Uterus (tissue), 4 donors: ENCODE measurements at regions of chr2 and their contacts with region 1.

Region 1: GRCh38 chr2:38740851-38741731 is 10.1 kb downstream of the SRSF7 start:
- DNase-seq: no peak
- H3K4me3 ChIP-seq: no peak overlapping the region
- H3K27ac ChIP-seq: peak overlapping the region; percentile 70 to 77
- H3K4me1 ChIP-seq: no peaks in the 10 kb centered on the region
- H3K27me3 ChIP-seq: no peaks in the 10 kb centered on the region
- CTCF ChIP-seq: peak; percentile 55 to 70 (median 67)
- POLR2A ChIP-seq: no peak

Region 2: DNA sequence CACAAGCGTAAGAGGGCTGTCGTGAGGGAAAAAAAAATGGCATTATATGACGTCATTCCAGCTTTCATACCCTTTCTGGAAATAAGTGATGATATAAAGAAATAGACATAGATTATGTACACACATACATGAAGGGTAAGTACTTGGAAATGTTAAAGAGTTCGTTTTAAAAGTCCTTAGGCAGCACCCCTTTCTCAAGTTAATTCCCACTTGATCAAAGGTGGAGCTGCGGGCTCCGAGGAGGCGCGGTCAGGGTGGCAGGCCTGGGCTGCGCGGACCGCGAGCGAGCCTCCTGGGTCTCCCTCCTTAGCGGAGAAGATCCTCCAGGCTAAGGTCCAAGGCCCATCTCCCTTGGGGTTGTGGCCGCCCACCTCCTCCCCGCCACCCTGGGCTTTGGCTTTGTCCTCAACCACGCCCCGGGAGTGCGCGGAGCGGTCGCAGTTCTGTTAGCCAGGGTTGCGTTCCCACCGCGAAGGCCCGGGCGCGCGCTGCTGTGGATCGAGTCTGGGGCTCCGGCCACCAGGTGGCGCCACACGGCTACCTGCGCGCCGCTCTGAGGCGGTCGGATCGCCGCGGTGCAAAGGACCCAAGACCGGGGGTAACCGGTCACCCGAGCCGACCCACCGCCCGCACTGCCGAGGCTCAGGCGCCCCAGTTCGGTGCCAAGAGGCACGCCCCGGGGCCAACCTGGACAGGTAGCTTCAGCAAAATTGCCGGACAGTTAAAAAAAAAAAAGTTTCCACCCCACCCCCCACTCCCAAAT is 205.2 kb before region 1 on chr2:
- intact Hi-C with region 1: loop called (anchors 10 kb)
- DNase-seq: peak; percentile 86
- H3K4me3 ChIP-seq: peak overlapping the region; percentile 45 to 50
- H3K27ac ChIP-seq: peak overlapping the region; percentile 77 to 87
- H3K4me1 ChIP-seq: peaks cover 0 to 4% of the 10 kb centered on the region in 2 donors
- H3K27me3 ChIP-seq: no peaks in the 10 kb centered on the region
- CTCF ChIP-seq: peak; percentile 87 to 95 (median 91)
- POLR2A ChIP-seq: peak in 1 of 2 donors; percentile 41

Region 3: DNA sequence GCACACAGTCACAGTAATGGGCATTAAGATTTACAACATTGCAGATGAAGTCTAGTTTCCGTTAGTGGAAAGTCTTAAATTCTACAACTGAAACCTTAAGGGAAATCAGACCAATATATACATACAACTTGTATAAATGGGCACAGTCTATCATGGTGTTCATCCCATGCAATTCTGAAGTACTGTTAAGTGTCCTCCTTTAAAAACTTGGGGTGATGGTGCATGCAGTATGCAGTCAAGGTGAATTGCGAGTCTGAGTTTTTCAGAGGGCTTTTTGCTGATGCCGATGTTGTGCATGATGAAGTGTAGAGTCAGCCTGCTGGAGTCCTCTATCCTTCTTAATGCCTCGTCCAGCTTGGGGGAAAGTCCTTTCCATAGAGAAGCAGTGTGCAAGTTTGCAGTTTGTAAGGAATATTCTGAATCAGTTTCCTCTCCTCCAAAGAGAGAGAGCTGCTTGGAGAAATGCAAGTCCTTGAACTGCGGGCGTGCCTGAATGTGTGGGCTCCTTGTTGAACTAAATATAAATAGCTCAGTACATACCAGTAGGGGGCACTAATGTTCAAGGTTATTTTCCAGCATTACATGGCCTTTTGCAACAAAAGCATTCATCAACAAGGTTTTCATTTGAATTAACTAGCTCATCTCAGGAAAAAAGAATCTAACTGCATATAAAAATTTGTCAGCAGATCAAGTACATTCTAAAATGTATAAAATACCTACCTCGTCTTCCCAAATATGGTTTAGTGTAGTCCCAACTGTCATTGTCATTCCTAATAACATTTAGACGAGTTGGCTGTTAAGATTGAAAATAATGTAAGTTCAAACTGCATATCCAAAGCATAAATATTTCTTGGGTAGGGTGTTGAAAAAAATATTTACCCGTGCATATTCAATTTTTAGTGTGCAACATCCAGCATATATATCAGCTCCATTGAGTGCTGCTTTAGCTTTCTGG is 159.6 kb before region 1 on chr2:
- intact Hi-C with region 1: loop called (anchors 10 kb)
- DNase-seq: peak in 1 of 2 donors; percentile 34
- H3K4me3 ChIP-seq: no peak overlapping the region
- H3K27ac ChIP-seq: no peak overlapping the region
- H3K4me1 ChIP-seq: no peaks in the 10 kb centered on the region
- H3K27me3 ChIP-seq: no peaks in the 10 kb centered on the region
- CTCF ChIP-seq: peak; percentile 58 to 78 (median 66)
- POLR2A ChIP-seq: no peak